WTC11 (cell line): ENCODE measurements at regions of chr4 and their contacts with region 1.

Region 1: GRCh38 chr4:52545099-52546069 is 113.7 kb downstream of the USP46 start:
- DNase-seq: peak; percentile 85
- ATAC-seq: peak; percentile 95
- H3K4me3 Mint-ChIP-seq: no peak overlapping the region
- H3K27ac Mint-ChIP-seq: no peak overlapping the region; the same call in 1 of the 2 replicates
- H3K4me1 Mint-ChIP-seq: peaks cover 22% of the 10 kb centered on the region
- H3K27me3 Mint-ChIP-seq: no peaks in the 10 kb centered on the region
- CTCF ChIP-seq: peak; percentile 95

Region 2: GRCh38 chr4:52312714-52313113 is 232.7 kb before region 1 on chr4:
- CTCF ChIA-PET with region 1: no interaction called
- POLR2A ChIA-PET with region 1: no interaction called
- DNase-seq: no peak
- ATAC-seq: no peak; the same call in none of the 2 replicates
- H3K4me3 Mint-ChIP-seq: no peak overlapping the region
- H3K27ac Mint-ChIP-seq: no peak overlapping the region
- H3K4me1 Mint-ChIP-seq: peaks cover 12% of the 10 kb centered on the region
- H3K27me3 Mint-ChIP-seq: no peaks in the 10 kb centered on the region
- CTCF ChIP-seq: no peak

Region 3: GRCh38 chr4:52566136-52567031 is 21.0 kb after region 1 on chr4:
- CTCF ChIA-PET with region 1: interaction called, 17 read pairs
- POLR2A ChIA-PET with region 1: no interaction called
- DNase-seq: no peak
- ATAC-seq: no peak
- H3K4me3 Mint-ChIP-seq: no peak overlapping the region
- H3K27ac Mint-ChIP-seq: no peak overlapping the region
- H3K4me1 Mint-ChIP-seq: peaks cover 40% of the 10 kb centered on the region
- H3K27me3 Mint-ChIP-seq: peaks cover 3% of the 10 kb centered on the region; the same call in 1 of the 2 replicates
- CTCF ChIP-seq: no peak

Region 4: DNA sequence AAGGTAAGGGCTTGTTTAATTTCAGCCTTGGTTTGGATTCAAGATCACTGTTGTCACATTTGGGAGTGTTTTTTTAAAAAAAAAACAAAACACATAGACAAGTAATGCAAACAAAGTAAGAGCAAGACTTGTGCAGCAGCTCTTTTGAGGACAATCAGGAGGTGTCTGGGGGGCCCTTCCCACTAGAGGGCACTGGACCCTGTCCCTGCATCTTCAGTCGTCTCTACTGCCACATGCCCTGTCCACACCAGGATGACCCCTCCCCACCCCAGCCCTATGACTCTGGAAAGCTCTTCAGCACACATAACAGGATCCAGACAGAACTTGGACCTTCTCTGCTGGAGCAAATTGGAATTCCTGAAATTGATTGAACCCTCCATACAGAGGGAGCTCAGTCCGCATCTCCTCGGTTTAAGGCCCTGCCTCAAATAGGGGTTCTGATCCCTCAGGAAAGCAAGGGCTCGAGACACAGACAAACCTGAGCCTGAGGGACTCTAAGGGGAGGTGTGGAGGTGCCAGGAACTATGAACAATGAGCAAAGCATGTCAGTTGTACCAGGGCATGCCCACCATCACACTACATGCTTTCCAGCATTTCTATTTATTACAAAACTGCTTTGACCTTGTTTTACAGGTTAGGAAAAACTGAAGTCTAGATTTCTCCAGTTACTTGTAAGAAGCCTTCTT is 42.9 kb after region 1 on chr4:
- CTCF ChIA-PET with region 1: interaction called, 24 read pairs
- POLR2A ChIA-PET with region 1: no interaction called
- DNase-seq: peak; percentile 64
- ATAC-seq: peak; percentile 88
- H3K4me3 Mint-ChIP-seq: no peak overlapping the region
- H3K27ac Mint-ChIP-seq: no peak overlapping the region
- H3K4me1 Mint-ChIP-seq: peaks cover 25% of the 10 kb centered on the region
- H3K27me3 Mint-ChIP-seq: no peaks in the 10 kb centered on the region
- CTCF ChIP-seq: peak; percentile 45; the same call in 1 of the 2 replicates

Region 5: GRCh38 chr4:52659001-52659721 is 113.8 kb after region 1 on chr4 and contains the start of gene USP46:
- CTCF ChIA-PET with region 1: interaction called, 14 read pairs
- POLR2A ChIA-PET with region 1: no interaction called
- DNase-seq: peak; percentile 68
- ATAC-seq: peak; percentile 62
- H3K4me3 Mint-ChIP-seq: peak within 1 kb of the TSS; percentile 78
- H3K27ac Mint-ChIP-seq: peak within 1 kb of the TSS; percentile 93; the same call in 1 of the 2 replicates
- H3K4me1 Mint-ChIP-seq: peaks cover 51% of the 10 kb centered on the region
- H3K27me3 Mint-ChIP-seq: peaks cover 10% of the 10 kb centered on the region
- CTCF ChIP-seq: no peak
- total RNA-seq, gene USP46: 48.1 to 54.1 TPM (median 49.5 TPM) in 3 replicates

Region 6: GRCh38 chr4:52665592-52665991 is 120.2 kb after region 1 on chr4:
- CTCF ChIA-PET with region 1: interaction called, 11 read pairs
- POLR2A ChIA-PET with region 1: no interaction called
- DNase-seq: no peak
- ATAC-seq: peak; percentile 64
- H3K4me3 Mint-ChIP-seq: no peak overlapping the region
- H3K27ac Mint-ChIP-seq: no peak overlapping the region
- H3K4me1 Mint-ChIP-seq: peaks cover 15% of the 10 kb centered on the region
- H3K27me3 Mint-ChIP-seq: peaks cover 4% of the 10 kb centered on the region
- CTCF ChIP-seq: no peak

Region 7: GRCh38 chr4:52721968-52722815 is 176.8 kb after region 1 on chr4:
- CTCF ChIA-PET with region 1: interaction called, 11 read pairs
- POLR2A ChIA-PET with region 1: no interaction called
- DNase-seq: peak; percentile 95
- ATAC-seq: peak; percentile 93
- H3K4me3 Mint-ChIP-seq: peak overlapping the region; percentile 53
- H3K27ac Mint-ChIP-seq: peak overlapping the region; percentile 92
- H3K4me1 Mint-ChIP-seq: peaks cover 21% of the 10 kb centered on the region
- H3K27me3 Mint-ChIP-seq: no peaks in the 10 kb centered on the region; the same call in 1 of the 2 replicates
- CTCF ChIP-seq: no peak

Region 8: DNA sequence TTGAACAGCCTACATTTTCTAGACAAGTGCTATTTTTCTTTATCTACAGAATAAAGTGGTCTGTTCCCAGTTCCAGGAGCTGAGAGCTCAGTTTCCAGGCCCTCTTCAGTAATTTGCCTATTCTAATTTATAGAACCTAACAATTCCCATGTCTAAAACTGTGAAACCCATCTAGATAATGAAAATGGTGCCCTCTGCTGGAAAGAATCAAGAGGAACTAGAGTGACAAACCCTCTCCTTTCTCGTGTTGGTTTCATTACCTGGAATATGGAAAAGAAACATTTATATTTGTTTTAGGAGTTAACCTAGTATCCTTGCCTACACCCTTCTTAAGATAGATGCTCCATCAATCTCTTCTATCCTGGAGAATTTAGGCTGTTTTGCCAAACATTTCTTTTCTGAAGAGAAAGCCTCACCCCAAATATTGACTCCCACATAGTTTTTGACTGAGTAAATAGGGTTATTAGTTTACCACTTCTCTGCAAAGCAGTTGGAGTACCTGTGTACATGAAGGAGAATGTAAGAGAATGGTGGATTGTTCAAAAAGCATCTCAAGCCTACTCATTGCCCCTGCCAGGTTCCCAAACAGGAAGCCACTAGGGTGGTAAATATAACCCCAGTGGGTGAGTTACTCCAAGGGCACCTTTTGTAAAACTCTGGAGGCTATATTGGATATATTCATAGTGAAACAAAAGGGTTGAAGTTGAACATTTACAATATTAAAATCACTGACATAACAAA is 438.3 kb after region 1 on chr4:
- CTCF ChIA-PET with region 1: interaction called, 23 read pairs
- POLR2A ChIA-PET with region 1: no interaction called
- DNase-seq: no peak
- ATAC-seq: peak; percentile 60
- H3K4me3 Mint-ChIP-seq: no peak overlapping the region
- H3K27ac Mint-ChIP-seq: no peak overlapping the region
- H3K4me1 Mint-ChIP-seq: peaks cover 20% of the 10 kb centered on the region
- H3K27me3 Mint-ChIP-seq: no peaks in the 10 kb centered on the region
- CTCF ChIP-seq: peak; percentile 45; the same call in 1 of the 2 replicates